ENCODE measurements at regions of chr14 and their contacts with region 1.

Region 1: GRCh38 chr14:20427231-20428009 is 8.5 kb downstream of the KLHL33 start:
- DNase-seq: peak; percentile 48
- ATAC-seq: peak; percentile 59
- H3K4me3 Mint-ChIP-seq: peak overlapping the region; percentile 78
- H3K27ac Mint-ChIP-seq: peak overlapping the region; percentile 94
- H3K4me1 Mint-ChIP-seq: peaks cover 45% of the 10 kb centered on the region
- H3K27me3 Mint-ChIP-seq: no peaks in the 10 kb centered on the region

Region 2: DNA sequence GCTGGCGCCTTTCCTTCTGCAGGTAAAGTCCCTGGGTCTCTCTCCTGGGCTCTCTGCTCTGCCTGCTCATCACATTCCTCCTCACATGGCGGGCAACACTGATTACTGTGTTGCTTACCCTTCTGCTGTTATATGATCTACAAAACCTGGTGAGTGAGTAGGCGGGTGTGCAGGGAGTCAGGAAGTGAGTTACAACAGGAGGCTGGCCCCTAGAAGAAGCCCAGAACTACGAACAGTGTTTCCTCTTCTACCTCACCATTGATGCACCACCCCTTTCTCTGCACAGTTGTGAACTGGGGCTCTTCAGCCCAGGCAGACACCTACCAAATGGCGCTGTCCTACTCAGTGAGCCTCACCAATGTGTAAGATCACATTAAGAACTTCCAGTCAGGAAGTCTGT is 13.5 kb after region 1 on chr14:
- CTCF ChIA-PET with region 1: interaction called, 4 read pairs
- POLR2A ChIA-PET with region 1: interaction called, 15 read pairs
- DNase-seq: peak; percentile 60
- ATAC-seq: peak; percentile 95
- H3K4me3 Mint-ChIP-seq: peak overlapping the region; percentile 45
- H3K27ac Mint-ChIP-seq: peak overlapping the region; percentile 79
- H3K4me1 Mint-ChIP-seq: peaks cover 24% of the 10 kb centered on the region
- H3K27me3 Mint-ChIP-seq: no peaks in the 10 kb centered on the region

Region 3: DNA sequence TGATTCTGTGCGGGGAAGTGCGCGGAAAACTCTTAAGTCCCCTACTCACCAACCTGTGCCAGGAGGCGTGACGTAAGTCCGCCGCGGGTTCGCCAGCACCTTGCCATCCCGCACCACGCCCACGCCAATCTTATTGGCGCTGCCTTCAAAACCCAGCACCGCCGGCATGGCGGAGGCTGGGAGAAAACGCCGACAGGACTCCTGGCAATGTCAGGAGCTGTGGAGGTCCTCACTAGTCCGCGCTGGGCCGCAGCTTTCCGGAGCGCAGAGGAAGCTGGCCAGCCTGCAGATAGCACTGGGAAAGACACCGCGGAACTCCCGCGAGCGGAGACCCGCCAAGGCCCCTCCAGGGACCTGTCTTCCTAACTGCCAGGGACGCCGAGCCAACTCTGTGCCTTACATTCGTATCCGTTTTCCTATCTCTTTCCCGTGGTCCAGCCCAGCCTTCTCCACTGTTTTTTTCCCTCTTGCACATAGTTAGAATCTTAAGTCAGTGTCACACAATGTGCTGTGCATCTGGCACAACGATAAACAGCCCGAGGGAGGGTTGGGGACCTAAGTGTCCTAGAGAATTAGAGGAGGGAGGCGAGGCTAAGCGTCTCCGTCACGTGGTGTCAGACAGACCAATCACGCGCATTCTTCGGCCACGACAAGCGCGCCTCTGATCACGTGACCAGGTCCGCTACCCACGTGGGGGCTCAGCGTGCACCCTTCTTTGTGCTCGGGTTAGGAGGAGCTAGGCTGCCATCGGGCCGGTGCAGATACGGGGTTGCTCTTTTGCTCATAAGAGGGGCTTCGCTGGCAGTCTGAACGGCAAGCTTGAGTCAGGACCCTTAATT is 27.3 kb after region 1 on chr14 and contains the starts of genes APEX1 and OSGEP:
- CTCF ChIA-PET with region 1: interaction called, 3 read pairs
- POLR2A ChIA-PET with region 1: interaction called, 13 read pairs
- DNase-seq: peak; percentile 99
- ATAC-seq: peak; percentile 90
- H3K4me3 Mint-ChIP-seq: peak within 1 kb of the TSS; percentile 36
- H3K27ac Mint-ChIP-seq: no peak within 1 kb of the TSS
- H3K4me1 Mint-ChIP-seq: peaks cover 24% of the 10 kb centered on the region
- H3K27me3 Mint-ChIP-seq: no peaks in the 10 kb centered on the region
- total RNA-seq, gene APEX1: 135 to 142 TPM
- total RNA-seq, gene OSGEP: 51.8 to 56.6 TPM

Region 4: DNA sequence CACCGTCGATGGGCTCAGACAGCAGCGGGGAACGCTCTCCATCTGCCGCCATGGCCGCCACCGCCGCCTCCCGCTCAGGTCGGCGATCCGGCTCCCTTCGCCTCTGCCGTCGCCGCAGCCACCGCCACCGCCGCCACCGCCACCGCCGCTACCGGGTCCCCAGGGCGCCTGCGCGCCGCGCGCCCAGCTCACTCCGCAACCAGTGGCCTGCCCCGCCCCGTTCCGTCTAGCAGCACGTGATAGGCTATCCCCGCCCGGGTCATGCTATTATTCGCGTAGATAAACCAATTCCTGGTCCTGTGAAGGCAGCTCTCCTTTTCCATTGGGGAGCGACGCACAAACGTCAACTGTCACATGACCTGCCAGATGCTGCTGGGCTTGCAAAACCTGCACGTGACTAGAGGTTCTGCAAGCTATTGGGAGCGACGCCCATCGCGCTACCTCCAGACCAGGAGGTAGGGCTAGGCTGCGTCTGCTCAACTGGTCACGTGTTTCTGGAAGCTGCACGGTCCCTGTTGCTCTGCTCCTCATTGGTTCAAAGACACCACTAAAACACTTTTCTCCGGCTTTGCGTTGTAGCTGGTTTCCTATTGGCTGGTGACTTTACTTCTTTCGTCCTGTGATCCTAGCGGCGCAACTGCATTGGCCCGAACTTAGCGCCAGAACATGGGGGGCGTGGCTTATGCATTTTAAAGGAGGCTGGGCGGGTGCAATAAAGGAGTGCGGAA is 34.0 kb after region 1 on chr14 and contains the start of gene PIP4P1:
- CTCF ChIA-PET with region 1: interaction called, 6 read pairs
- POLR2A ChIA-PET with region 1: interaction called, 13 read pairs
- DNase-seq: peak; percentile 99
- ATAC-seq: peak; percentile 97
- H3K4me3 Mint-ChIP-seq: peak within 1 kb of the TSS; percentile 95
- H3K27ac Mint-ChIP-seq: peak within 1 kb of the TSS; percentile 91
- H3K4me1 Mint-ChIP-seq: peaks cover 38% of the 10 kb centered on the region
- H3K27me3 Mint-ChIP-seq: peaks cover 2% of the 10 kb centered on the region
- total RNA-seq, gene PIP4P1: 31.3 to 31.6 TPM

Region 5: GRCh38 chr14:20469242-20469889 is 41.9 kb after region 1 on chr14 and contains the start of gene PNP:
- CTCF ChIA-PET with region 1: interaction called, 4 read pairs
- POLR2A ChIA-PET with region 1: interaction called, 10 read pairs
- DNase-seq: peak; percentile 93
- ATAC-seq: peak; percentile 93
- H3K4me3 Mint-ChIP-seq: peak within 1 kb of the TSS; percentile 87
- H3K27ac Mint-ChIP-seq: peak within 1 kb of the TSS; percentile 94
- H3K4me1 Mint-ChIP-seq: peaks cover 35% of the 10 kb centered on the region
- H3K27me3 Mint-ChIP-seq: no peaks in the 10 kb centered on the region
- total RNA-seq, gene PNP: 211 to 216 TPM